ENCODE measurements at regions of chr12 and their contacts with region 1.

Region 1: DNA sequence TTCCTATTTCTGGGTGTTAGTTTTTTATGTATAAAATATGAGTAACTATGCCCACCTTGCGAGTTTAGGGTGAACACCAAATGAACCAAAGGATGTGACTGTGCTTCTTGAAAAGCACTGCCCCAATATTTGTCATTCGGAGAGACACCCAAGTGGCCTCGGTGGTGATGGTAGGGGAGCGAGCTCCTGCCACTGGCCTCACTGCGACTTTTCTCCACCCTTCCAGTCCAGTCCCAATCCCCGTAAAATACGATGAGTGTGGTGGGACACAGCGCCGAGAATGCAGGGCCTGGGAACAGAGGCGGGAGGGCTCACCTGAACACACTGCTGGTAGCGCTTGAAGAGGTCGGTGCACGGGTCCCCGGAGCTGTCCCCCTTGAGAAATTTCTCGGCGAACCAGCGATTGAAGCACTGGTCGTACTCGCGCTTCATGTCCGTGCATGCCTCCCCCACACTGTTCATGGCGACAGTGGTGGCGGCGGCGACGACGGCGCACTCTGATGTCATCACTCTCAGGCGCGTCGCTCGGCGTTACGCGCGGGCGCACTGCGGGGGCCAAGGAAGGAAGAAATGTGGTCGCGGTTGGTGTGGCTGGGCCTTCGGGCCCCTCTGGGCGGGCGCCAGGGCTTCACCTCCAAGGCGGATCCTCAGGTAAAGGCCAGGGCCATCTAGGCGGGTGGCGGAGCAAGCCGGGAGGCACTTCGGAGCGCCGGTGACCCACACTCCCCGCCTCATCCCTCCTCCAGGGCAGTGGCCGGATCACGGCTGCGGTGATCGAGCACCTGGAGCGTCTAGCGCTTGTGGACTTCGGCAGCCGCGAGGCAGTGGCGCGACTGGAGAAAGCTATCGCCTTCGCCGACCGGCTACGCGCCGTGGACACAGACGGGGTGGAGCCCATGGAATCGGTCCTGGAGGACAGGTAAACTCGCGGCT is at the starts of genes GATC and TRIAP1:
- DNase-seq: peak; percentile 87
- H3K4me3 Mint-ChIP-seq: peak within 1 kb of the TSS; percentile 98
- H3K27ac Mint-ChIP-seq: peak within 1 kb of the TSS; percentile 98
- H3K4me1 Mint-ChIP-seq: peaks cover 17% of the 10 kb centered on the region
- H3K27me3 Mint-ChIP-seq: peaks cover 1% of the 10 kb centered on the region
- total RNA-seq, gene GATC: 30.4 and 38.0 TPM in 2 replicates
- total RNA-seq, gene TRIAP1: 36.8 TPM in 2 replicates

Region 2: DNA sequence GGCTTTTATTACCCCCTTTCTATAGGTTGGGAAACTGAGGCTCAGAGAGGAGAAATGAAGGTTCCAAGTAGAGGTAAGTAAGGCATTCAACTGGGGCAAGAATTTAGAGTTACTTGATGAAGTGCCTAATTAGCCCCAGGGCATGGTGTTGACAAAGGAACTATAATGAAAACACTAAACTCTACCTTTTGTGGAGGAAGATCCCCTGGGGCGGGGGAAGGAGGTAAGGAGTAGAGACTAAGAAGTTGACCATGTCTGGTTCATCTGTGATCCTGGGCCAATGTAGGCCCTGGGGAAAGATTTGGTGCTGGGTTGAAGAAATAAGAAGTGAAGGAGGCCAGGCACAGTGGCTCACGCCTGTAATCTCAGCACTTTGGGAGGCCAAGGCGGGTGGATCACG is 24.5 kb before region 1 on chr12:
- intact Hi-C with region 1: no loop called
- DNase-seq: no peak
- H3K4me3 Mint-ChIP-seq: no peak overlapping the region
- H3K27ac Mint-ChIP-seq: no peak overlapping the region
- H3K4me1 Mint-ChIP-seq: no peaks in the 10 kb centered on the region
- H3K27me3 Mint-ChIP-seq: peaks cover 2% of the 10 kb centered on the region

Region 3: GRCh38 chr12:120495723-120496412 is 49.7 kb after region 1 on chr12 and contains the start of gene DYNLL1:
- intact Hi-C with region 1: loop called (anchors 5 kb)
- DNase-seq: peak; percentile 96
- H3K4me3 Mint-ChIP-seq: peak within 1 kb of the TSS; percentile 98
- H3K27ac Mint-ChIP-seq: peak within 1 kb of the TSS; percentile 87
- H3K4me1 Mint-ChIP-seq: peaks cover 31% of the 10 kb centered on the region
- H3K27me3 Mint-ChIP-seq: no peaks in the 10 kb centered on the region
- total RNA-seq, gene DYNLL1: 323 and 329 TPM in 2 replicates

Region 4: GRCh38 chr12:120528861-120529525 is 82.8 kb after region 1 on chr12 and contains the start of gene COQ5:
- intact Hi-C with region 1: loop called (anchors 1 kb)
- DNase-seq: peak; percentile 76
- H3K4me3 Mint-ChIP-seq: peak within 1 kb of the TSS; percentile 99
- H3K27ac Mint-ChIP-seq: peak within 1 kb of the TSS; percentile 99
- H3K4me1 Mint-ChIP-seq: peaks cover 15% of the 10 kb centered on the region
- H3K27me3 Mint-ChIP-seq: no peaks in the 10 kb centered on the region
- total RNA-seq, gene COQ5: 29.3 and 29.9 TPM in 2 replicates